CD14-positive monocyte (primary cell): ENCODE measurements at regions of chr10 and their contacts with region 1.

Region 1: GRCh38 chr10:124719213-124719851 is 24.8 kb downstream of the FAM53B start:
- DNase-seq: peak; percentile 84 to 86 (median 85)
- H3K4me3 ChIP-seq: peak overlapping the region in 1 of 3 experiments; percentile 35
- H3K4me3 Mint-ChIP-seq: peak overlapping the region; percentile 43 to 67
- H3K27ac ChIP-seq: peak overlapping the region; percentile 97 to 98
- H3K27ac Mint-ChIP-seq: peak overlapping the region; percentile 92 to 99 (median 96)
- H3K4me1 ChIP-seq: peaks cover 76% of the 10 kb centered on the region in 2 donors
- H3K4me1 Mint-ChIP-seq: peaks cover 86% of the 10 kb centered on the region
- H3K27me3 ChIP-seq: no peaks in the 10 kb centered on the region
- H3K27me3 Mint-ChIP-seq: peaks cover 0 to 1% (median 0%) of the 10 kb centered on the region in 3 donors
- CTCF ChIP-seq: peak; percentile 65

Region 2: GRCh38 chr10:124641282-124642087 is 77.8 kb before region 1 on chr10:
- intact Hi-C with region 1: loop called in 1 of 2 experiments (anchors 2 kb)
- DNase-seq: peak; percentile 84 to 91 (median 85)
- H3K4me3 ChIP-seq: peak overlapping the region in 2 of 3 experiments; percentile 2 to 62
- H3K4me3 Mint-ChIP-seq: peak overlapping the region; percentile 66 to 89
- H3K27ac ChIP-seq: peak overlapping the region; percentile 93 to 99
- H3K27ac Mint-ChIP-seq: peak overlapping the region; percentile 96 to 99 (median 98)
- H3K4me1 ChIP-seq: peaks cover 93 to 100% of the 10 kb centered on the region in 2 donors
- H3K4me1 Mint-ChIP-seq: peaks cover 94% of the 10 kb centered on the region
- H3K27me3 ChIP-seq: no peaks in the 10 kb centered on the region
- H3K27me3 Mint-ChIP-seq: peaks cover 0 to 2% (median 0%) of the 10 kb centered on the region in 3 donors
- CTCF ChIP-seq: no peak

Region 3: GRCh38 chr10:124671486-124672075 is 47.8 kb before region 1 on chr10:
- intact Hi-C with region 1: loop called in 1 of 2 experiments (anchors 5 kb)
- DNase-seq: peak; percentile 75 to 81 (median 79)
- H3K4me3 ChIP-seq: no peak overlapping the region
- H3K4me3 Mint-ChIP-seq: peak overlapping the region; percentile 67 to 71
- H3K27ac ChIP-seq: peak overlapping the region; percentile 73 to 83
- H3K27ac Mint-ChIP-seq: peak overlapping the region; percentile 96 to 99 (median 98)
- H3K4me1 ChIP-seq: peaks cover 43 to 60% of the 10 kb centered on the region in 2 donors
- H3K4me1 Mint-ChIP-seq: peaks cover 71% of the 10 kb centered on the region
- H3K27me3 ChIP-seq: no peaks in the 10 kb centered on the region
- H3K27me3 Mint-ChIP-seq: peaks cover 0 to 3% (median 0%) of the 10 kb centered on the region in 3 donors
- CTCF ChIP-seq: peak; percentile 77

Region 4: DNA sequence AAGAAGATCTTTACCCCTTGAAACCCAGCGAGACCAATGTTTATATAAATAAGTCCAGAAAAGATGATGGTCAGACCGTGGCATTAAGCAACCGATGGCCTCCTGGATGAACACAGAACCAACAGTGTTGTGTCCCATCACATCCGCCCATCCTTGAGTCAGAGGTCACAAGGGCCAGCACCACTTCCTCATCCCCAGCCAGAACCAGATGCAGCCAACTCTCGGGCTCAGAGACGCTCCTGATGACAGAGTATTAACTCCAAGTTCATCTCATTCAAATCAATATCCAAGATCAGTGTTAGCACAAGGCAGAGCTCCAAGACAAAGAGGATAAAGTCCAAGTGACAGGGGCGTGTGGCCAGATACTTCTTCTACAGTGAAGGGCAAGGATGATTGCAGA is 38.7 kb before region 1 on chr10:
- intact Hi-C with region 1: loop called in 1 of 2 experiments (anchors 2 kb)
- DNase-seq: peak; percentile 94 to 97 (median 95)
- H3K4me3 ChIP-seq: peak overlapping the region in 1 of 3 experiments; percentile 26
- H3K4me3 Mint-ChIP-seq: peak overlapping the region in 1 of 2 donors; percentile 63
- H3K27ac ChIP-seq: peak overlapping the region; percentile 99
- H3K27ac Mint-ChIP-seq: peak overlapping the region; percentile 93 to 98 (median 96)
- H3K4me1 ChIP-seq: peaks cover 98 to 99% of the 10 kb centered on the region in 2 donors
- H3K4me1 Mint-ChIP-seq: peaks cover 89% of the 10 kb centered on the region
- H3K27me3 ChIP-seq: no peaks in the 10 kb centered on the region
- H3K27me3 Mint-ChIP-seq: peaks cover 0 to 3% (median 0%) of the 10 kb centered on the region in 3 donors
- CTCF ChIP-seq: no peak

Region 5: GRCh38 chr10:124701435-124701834 is 17.9 kb before region 1 on chr10:
- intact Hi-C with region 1: loop called in 1 of 2 experiments (anchors 2 kb)
- DNase-seq: peak; percentile 41 to 59 (median 51)
- H3K4me3 ChIP-seq: peak overlapping the region in 1 of 3 experiments; percentile 29
- H3K4me3 Mint-ChIP-seq: peak overlapping the region in 1 of 2 donors; percentile 41
- H3K27ac ChIP-seq: peak overlapping the region; percentile 85
- H3K27ac Mint-ChIP-seq: peak overlapping the region; percentile 90 to 98 (median 94)
- H3K4me1 ChIP-seq: peaks cover 61 to 66% of the 10 kb centered on the region in 2 donors
- H3K4me1 Mint-ChIP-seq: peaks cover 66% of the 10 kb centered on the region
- H3K27me3 ChIP-seq: no peaks in the 10 kb centered on the region
- H3K27me3 Mint-ChIP-seq: no peaks in the 10 kb centered on the region
- CTCF ChIP-seq: no peak

Region 6: GRCh38 chr10:124955243-124955642 is 235.9 kb after region 1 on chr10:
- intact Hi-C with region 1: no loop called
- DNase-seq: no peak
- H3K4me3 ChIP-seq: no peak overlapping the region
- H3K4me3 Mint-ChIP-seq: no peak overlapping the region
- H3K27ac ChIP-seq: no peak overlapping the region
- H3K27ac Mint-ChIP-seq: no peak overlapping the region
- H3K4me1 ChIP-seq: peaks cover 18 to 24% of the 10 kb centered on the region in 2 donors
- H3K4me1 Mint-ChIP-seq: peaks cover 30% of the 10 kb centered on the region
- H3K27me3 ChIP-seq: no peaks in the 10 kb centered on the region
- H3K27me3 Mint-ChIP-seq: peaks cover 0 to 1% (median 0%) of the 10 kb centered on the region in 3 donors
- CTCF ChIP-seq: no peak